Activated CD8-positive, alpha-beta T cell treated with anti-CD3 and anti-CD28 coated beads for 36 hours (primary cell): ENCODE measurements at regions of chr12 and their contacts with region 1.

Region 1: DNA sequence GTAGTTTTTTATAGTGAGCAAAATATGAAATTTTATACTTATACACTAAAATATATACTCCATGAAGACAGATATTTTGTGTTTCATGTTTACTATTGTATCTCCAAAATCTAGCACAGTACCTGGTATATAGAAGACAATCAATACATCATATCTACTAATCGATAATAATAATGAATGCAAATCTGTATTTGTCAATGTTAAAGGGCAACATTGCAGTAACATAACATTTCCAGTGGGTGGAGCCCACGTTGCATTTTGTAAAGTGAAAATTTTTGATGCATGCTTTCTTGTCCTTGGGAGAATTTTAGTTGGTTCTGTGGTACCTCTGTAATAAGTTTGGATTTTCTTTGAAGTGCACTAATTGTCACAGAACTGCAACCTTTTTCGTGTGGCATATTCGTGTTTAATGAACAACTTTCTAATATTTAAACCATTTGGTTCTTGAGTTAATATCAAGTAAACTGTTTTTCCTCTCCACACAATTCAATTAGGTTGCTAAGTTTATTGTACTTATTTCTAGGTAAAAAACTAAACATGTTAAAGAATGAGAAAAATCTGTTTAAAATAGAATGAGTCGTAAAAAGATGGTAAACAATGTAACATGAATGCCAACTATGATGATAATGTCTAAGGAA is 47.4 kb downstream of the AVPR1A start:
- DNase-seq: peak; percentile 6
- ATAC-seq: no peak
- H3K4me3 Mint-ChIP-seq: no peak overlapping the region
- H3K27ac Mint-ChIP-seq: no peak overlapping the region
- H3K4me1 Mint-ChIP-seq: no peaks in the 10 kb centered on the region
- H3K27me3 Mint-ChIP-seq: no peaks in the 10 kb centered on the region
- CTCF ChIP-seq: peak; percentile 90

Region 2: GRCh38 chr12:63068857-63069442 is 34.7 kb before region 1 on chr12:
- CTCF ChIA-PET with region 1: no interaction called
- POLR2A ChIA-PET with region 1: no interaction called
- intact Hi-C with region 1: no loop called
- DNase-seq: peak; percentile 3
- ATAC-seq: no peak
- H3K4me3 Mint-ChIP-seq: no peak overlapping the region
- H3K27ac Mint-ChIP-seq: no peak overlapping the region
- H3K4me1 Mint-ChIP-seq: no peaks in the 10 kb centered on the region
- H3K27me3 Mint-ChIP-seq: no peaks in the 10 kb centered on the region
- CTCF ChIP-seq: peak; percentile 60

Region 3: GRCh38 chr12:63276537-63277365 is 173.1 kb after region 1 on chr12:
- CTCF ChIA-PET with region 1: interaction called, 3 read pairs
- POLR2A ChIA-PET with region 1: no interaction called
- intact Hi-C with region 1: loop called (anchors 10 kb)
- DNase-seq: peak; percentile 44
- ATAC-seq: peak; percentile 13
- H3K4me3 Mint-ChIP-seq: no peak overlapping the region
- H3K27ac Mint-ChIP-seq: no peak overlapping the region
- H3K4me1 Mint-ChIP-seq: no peaks in the 10 kb centered on the region
- H3K27me3 Mint-ChIP-seq: peaks cover 4% of the 10 kb centered on the region
- CTCF ChIP-seq: peak; percentile 60